ENCODE measurements at regions of chrX and their contacts with region 1.

Region 1: GRCh38 chrX:153032397-153033118 is 23.7 kb upstream of the PNMA3 start:
- DNase-seq: peak; percentile 89
- H3K4me3 ChIP-seq: no peak overlapping the region; a peak in 1 of 4 replicates
- H3K27ac ChIP-seq: no peak overlapping the region
- H3K4me1 ChIP-seq: no peaks in the 10 kb centered on the region; a peak in 1 of 4 replicates
- H3K27me3 ChIP-seq: peaks cover 18% of the 10 kb centered on the region
- CTCF ChIP-seq: peak; percentile 77
- EP300 ChIP-seq: no peak
- RAD21 ChIP-seq: peak; percentile 87

Region 2: DNA sequence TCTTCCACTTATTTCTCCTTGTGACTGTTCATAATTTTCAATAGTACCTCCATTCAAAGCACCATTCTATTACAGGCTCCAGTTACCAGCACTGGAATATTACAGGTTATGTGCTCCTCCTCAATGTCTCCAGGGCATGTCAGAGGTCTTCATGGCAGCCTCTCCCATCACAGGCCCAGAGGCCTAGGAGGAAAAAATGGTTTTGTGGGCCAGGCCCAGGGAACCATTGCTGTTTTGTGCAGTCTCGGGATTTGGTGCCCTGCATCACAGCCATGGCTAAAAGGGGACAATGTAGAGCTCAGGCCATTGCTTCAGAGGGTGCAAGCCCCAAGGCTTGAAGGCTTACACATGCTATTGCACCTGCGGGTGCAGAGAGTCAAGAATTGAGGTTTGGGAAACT is 16.5 kb after region 1 on chrX:
- CTCF ChIA-PET with region 1: interaction called, 10 read pairs
- POLR2A ChIA-PET with region 1: no interaction called
- DNase-seq: no peak
- H3K4me3 ChIP-seq: no peak overlapping the region
- H3K27ac ChIP-seq: no peak overlapping the region
- H3K4me1 ChIP-seq: no peaks in the 10 kb centered on the region
- H3K27me3 ChIP-seq: peaks cover 19% of the 10 kb centered on the region
- CTCF ChIP-seq: no peak
- EP300 ChIP-seq: no peak
- RAD21 ChIP-seq: no peak

Region 3: GRCh38 chrX:153190381-153190780 is 157.8 kb after region 1 on chrX:
- CTCF ChIA-PET with region 1: no interaction called
- POLR2A ChIA-PET with region 1: no interaction called
- DNase-seq: no peak
- H3K4me3 ChIP-seq: no peak overlapping the region
- H3K27ac ChIP-seq: no peak overlapping the region
- H3K4me1 ChIP-seq: no peaks in the 10 kb centered on the region
- H3K27me3 ChIP-seq: peaks cover 26% of the 10 kb centered on the region; the same call in 1 of the 2 replicates
- CTCF ChIP-seq: no peak
- EP300 ChIP-seq: no peak
- RAD21 ChIP-seq: no peak

Region 4: GRCh38 chrX:153381684-153382532 is 349.4 kb after region 1 on chrX:
- CTCF ChIA-PET with region 1: interaction called, 17 read pairs
- POLR2A ChIA-PET with region 1: no interaction called
- DNase-seq: peak; percentile 84
- H3K4me3 ChIP-seq: no peak overlapping the region
- H3K27ac ChIP-seq: peak overlapping the region in 1 of 2 experiments; percentile 70; a peak in 1 of 4 replicates
- H3K4me1 ChIP-seq: peaks cover 0 to 3% of the 10 kb centered on the region in 2 experiments; a peak in 1 of 4 replicates
- H3K27me3 ChIP-seq: peaks cover 12% of the 10 kb centered on the region; the same call in 1 of the 2 replicates
- CTCF ChIP-seq: peak; percentile 27; the same call in 1 of the 2 replicates
- EP300 ChIP-seq: 0 out of 4 replicates have a peak, but pooled peaks of 1 of the 2 experiments have one; percentile 13
- RAD21 ChIP-seq: peak; percentile 78

Region 5: DNA sequence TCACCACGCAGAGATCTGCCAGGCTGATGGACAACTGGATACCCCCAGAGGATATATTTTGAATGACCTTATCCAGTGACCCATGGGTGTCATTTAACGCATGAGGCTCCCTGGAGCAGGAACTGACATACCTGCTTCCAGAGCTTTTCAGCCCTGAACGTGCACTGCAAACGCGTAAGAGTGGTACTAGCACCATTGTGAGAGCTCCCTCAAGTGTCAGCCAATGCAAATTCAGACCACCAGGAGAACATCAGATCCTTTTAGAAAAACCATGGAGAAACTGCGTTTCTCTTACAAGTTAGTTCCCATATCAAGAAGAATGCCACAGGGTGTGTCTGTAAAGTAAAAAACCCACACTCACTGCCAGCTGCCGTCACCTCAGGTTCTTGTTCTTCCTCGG is 406.0 kb after region 1 on chrX:
- CTCF ChIA-PET with region 1: interaction called, 24 read pairs
- POLR2A ChIA-PET with region 1: no interaction called
- DNase-seq: no peak
- H3K4me3 ChIP-seq: no peak overlapping the region
- H3K27ac ChIP-seq: no peak overlapping the region
- H3K4me1 ChIP-seq: no peaks in the 10 kb centered on the region
- H3K27me3 ChIP-seq: peaks cover 46% of the 10 kb centered on the region
- CTCF ChIP-seq: peak; percentile 31; the same call in 1 of the 2 replicates
- EP300 ChIP-seq: no peak
- RAD21 ChIP-seq: peak; percentile 59

Measured in SK-N-SH (cell line).